Activated naive CD8-positive, alpha-beta T cell treated with anti-CD3 and anti-CD28 coated beads, Interleukin-2, amount 10 ng/mL, durations not matched to agents 7 days and 5 days (primary cell): ENCODE measurements at regions of chr6 and their contacts with region 1.

Region 1: GRCh38 chr6:31897612-31898382 is at the start of gene EHMT2:
- DNase-seq: peak; percentile 93
- ATAC-seq: peak; percentile 62
- H3K4me3 Mint-ChIP-seq: peak within 1 kb of the TSS; percentile 98
- H3K27ac Mint-ChIP-seq: peak within 1 kb of the TSS; percentile 94
- H3K4me1 Mint-ChIP-seq: peaks cover 36% of the 10 kb centered on the region
- H3K27me3 Mint-ChIP-seq: no peaks in the 10 kb centered on the region
- total RNA-seq, gene EHMT2: 77.5 to 80.6 TPM

Region 2: DNA sequence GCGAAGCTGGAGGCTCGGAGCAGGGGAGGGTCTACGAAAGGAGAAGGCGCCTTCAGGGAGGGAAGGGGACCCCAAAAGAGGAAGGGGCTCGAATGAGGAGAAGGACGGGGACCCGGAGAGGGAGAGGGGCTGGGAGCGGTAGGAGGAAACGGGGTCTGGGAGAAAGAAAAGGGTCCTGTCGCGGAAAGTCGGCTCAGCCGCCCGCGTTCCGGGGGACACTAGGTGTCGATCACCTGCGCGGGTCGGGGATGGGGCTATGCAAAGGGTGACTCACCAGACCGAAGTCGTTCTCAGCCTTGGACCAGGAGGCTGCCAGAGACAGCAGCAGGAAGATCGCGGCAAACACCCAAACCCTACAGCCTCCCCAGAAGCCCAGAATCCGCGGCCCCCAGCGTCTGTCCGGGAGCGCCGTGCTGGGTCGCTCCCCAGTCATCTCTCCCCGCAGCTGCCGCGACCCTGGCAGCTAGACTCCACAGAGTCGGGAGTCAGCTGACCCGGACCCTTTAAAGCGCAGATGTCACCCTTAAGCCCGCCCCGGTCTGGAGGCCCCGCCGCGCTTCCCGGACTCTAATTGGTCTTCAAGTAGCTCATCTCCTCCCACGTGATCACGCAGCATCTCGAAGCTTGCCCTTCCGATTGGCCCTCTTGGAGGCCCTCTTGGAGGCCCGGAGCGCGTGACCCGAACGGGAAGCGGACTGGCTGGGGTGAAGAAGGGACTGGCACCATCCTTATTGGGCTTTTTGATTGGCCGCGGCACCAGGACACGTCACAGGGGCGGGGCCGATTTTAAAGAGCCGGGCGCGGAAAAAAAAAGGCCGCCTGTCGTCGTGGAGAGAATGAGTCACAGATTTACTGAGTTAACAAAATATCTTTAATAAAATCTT is 35.2 kb before region 1 on chr6 and contains the start of gene NEU1:
- POLR2A ChIA-PET with region 1: interaction called, 13 read pairs
- DNase-seq: peak; percentile 95
- ATAC-seq: peak; percentile 96
- H3K4me3 Mint-ChIP-seq: peak within 1 kb of the TSS; percentile 97
- H3K27ac Mint-ChIP-seq: peak within 1 kb of the TSS; percentile 86
- H3K4me1 Mint-ChIP-seq: peaks cover 13% of the 10 kb centered on the region
- H3K27me3 Mint-ChIP-seq: peaks cover 4% of the 10 kb centered on the region
- total RNA-seq, gene NEU1: 15.5 to 16.4 TPM

Region 3: GRCh38 chr6:31971993-31972708 is 74.4 kb after region 1 on chr6 and contains the start of gene DXO:
- POLR2A ChIA-PET with region 1: interaction called, 11 read pairs
- DNase-seq: peak; percentile 98
- ATAC-seq: peak; percentile 96
- H3K4me3 Mint-ChIP-seq: peak within 1 kb of the TSS; percentile 97
- H3K27ac Mint-ChIP-seq: peak within 1 kb of the TSS; percentile 99
- H3K4me1 Mint-ChIP-seq: peaks cover 25% of the 10 kb centered on the region
- H3K27me3 Mint-ChIP-seq: no peaks in the 10 kb centered on the region
- total RNA-seq, gene DXO: 22.4 to 28.6 TPM